Transverse colon (tissue), 4 donors: ENCODE measurements at regions of chr3 and their contacts with region 1.

Region 1: DNA sequence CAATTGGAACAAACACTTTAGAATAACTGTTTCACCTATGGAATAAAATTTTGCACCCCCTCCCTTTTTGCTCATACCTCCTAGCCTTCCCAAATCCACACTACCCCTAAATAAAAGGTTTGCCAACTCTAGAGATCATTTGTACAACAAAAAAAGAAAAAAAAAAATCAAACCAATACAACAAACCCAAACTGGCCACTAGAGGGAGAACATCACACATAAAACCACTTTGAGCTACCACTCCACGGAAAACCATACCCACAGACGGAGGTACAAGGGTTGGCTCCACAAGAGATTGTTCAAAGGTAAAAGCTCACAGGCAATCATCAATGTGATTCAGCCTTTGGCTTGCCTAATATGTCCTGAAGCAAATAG is 47.6 kb downstream of the SETMAR start:
- DNase-seq: peak; percentile 16
- H3K4me3 ChIP-seq: peak overlapping the region in 1 of 4 donors; percentile 2
- H3K27ac ChIP-seq: peak overlapping the region in 1 of 4 donors; percentile 52
- H3K4me1 ChIP-seq: peaks cover 0 to 4% (median 3%) of the 10 kb centered on the region in 4 donors
- H3K27me3 ChIP-seq: no peaks in the 10 kb centered on the region
- CTCF ChIP-seq: peak; percentile 75 to 82 (median 78)
- EP300 ChIP-seq: no peak
- POLR2A ChIP-seq: no peak

Region 2: DNA sequence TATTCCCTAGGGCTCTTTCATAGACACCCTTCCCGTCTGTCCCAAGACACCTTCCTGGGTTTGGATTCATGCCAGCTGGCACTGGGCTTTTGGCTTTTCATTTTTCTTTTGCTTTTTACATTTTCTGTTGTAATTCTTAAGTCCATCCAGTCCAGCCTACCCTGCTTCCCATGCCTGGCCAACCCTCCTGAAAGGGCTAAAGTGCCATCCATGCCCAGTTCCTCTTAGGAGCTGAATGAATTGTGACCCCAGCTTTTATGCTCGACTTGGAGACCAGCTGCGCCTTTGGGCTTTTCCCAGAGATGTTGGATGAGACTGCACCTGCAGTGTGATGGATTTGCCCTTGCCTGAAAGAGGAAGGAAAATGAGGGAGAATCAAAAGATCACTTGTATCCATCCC is 525.7 kb before region 1 on chr3:
- in situ Hi-C with region 1: no loop called
- intact Hi-C with region 1: loop called (anchors 5 kb)
- DNase-seq: no peak
- H3K4me3 ChIP-seq: no peak overlapping the region
- H3K27ac ChIP-seq: no peak overlapping the region
- H3K4me1 ChIP-seq: no peaks in the 10 kb centered on the region
- H3K27me3 ChIP-seq: no peaks in the 10 kb centered on the region
- CTCF ChIP-seq: no peak
- EP300 ChIP-seq: no peak
- POLR2A ChIP-seq: no peak

Region 3: GRCh38 chr3:4421121-4421520 is 70.3 kb after region 1 on chr3:
- in situ Hi-C with region 1: no loop called
- intact Hi-C with region 1: no loop called
- DNase-seq: no peak
- H3K4me3 ChIP-seq: no peak overlapping the region
- H3K27ac ChIP-seq: no peak overlapping the region
- H3K4me1 ChIP-seq: no peaks in the 10 kb centered on the region
- H3K27me3 ChIP-seq: no peaks in the 10 kb centered on the region
- CTCF ChIP-seq: no peak
- EP300 ChIP-seq: no peak
- POLR2A ChIP-seq: no peak

Region 4: GRCh38 chr3:4633078-4634004 is 282.6 kb after region 1 on chr3:
- in situ Hi-C with region 1: loop called (anchors 5 to 10 kb)
- intact Hi-C with region 1: loop called (anchors 5 kb)
- DNase-seq: no peak
- H3K4me3 ChIP-seq: no peak overlapping the region
- H3K27ac ChIP-seq: no peak overlapping the region
- H3K4me1 ChIP-seq: no peaks in the 10 kb centered on the region
- H3K27me3 ChIP-seq: no peaks in the 10 kb centered on the region
- CTCF ChIP-seq: peak; percentile 67 to 86 (median 83)
- EP300 ChIP-seq: no peak
- POLR2A ChIP-seq: no peak

Region 5: DNA sequence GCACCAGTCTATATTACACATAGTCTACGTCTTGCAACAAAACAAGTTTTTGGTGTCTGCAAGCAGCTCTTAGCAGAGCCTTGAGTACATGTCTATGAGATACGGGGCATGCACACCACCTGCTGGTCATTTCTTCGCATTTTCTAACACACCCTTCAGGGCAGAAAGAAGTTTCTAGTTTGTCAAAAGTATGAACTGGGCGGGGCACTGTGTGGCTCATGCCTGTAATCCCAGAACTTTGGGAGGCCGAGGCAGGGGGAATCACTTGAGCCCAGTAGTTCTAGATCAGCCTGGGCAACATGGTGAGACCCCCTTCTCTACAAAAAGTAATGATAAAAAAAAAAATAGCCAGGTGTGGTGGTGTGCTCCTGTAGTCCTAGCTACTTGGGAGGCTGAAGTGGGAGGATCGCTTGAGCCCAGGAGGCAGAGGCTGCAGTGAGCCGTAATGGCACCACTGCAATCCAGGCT is 707.1 kb after region 1 on chr3:
- in situ Hi-C with region 1: loop called in 1 of 4 experiments (anchors 25 kb)
- intact Hi-C with region 1: no loop called
- DNase-seq: peak; percentile 84
- H3K4me3 ChIP-seq: no peak overlapping the region
- H3K27ac ChIP-seq: no peak overlapping the region
- H3K4me1 ChIP-seq: peaks cover 0 to 20% (median 4%) of the 10 kb centered on the region in 4 donors
- H3K27me3 ChIP-seq: no peaks in the 10 kb centered on the region
- CTCF ChIP-seq: peak; percentile 70 to 88 (median 76)
- EP300 ChIP-seq: no peak
- POLR2A ChIP-seq: no peak